Right ventricle myocardium superior (tissue), 1 donor: ENCODE measurements at regions of chr15 and their contacts with region 1.

Region 1: GRCh38 chr15:59247364-59247763 is 40.7 kb downstream of the LDHAL6B start:
- DNase-seq: no peak
- ATAC-seq: peak; percentile 89

Region 2: DNA sequence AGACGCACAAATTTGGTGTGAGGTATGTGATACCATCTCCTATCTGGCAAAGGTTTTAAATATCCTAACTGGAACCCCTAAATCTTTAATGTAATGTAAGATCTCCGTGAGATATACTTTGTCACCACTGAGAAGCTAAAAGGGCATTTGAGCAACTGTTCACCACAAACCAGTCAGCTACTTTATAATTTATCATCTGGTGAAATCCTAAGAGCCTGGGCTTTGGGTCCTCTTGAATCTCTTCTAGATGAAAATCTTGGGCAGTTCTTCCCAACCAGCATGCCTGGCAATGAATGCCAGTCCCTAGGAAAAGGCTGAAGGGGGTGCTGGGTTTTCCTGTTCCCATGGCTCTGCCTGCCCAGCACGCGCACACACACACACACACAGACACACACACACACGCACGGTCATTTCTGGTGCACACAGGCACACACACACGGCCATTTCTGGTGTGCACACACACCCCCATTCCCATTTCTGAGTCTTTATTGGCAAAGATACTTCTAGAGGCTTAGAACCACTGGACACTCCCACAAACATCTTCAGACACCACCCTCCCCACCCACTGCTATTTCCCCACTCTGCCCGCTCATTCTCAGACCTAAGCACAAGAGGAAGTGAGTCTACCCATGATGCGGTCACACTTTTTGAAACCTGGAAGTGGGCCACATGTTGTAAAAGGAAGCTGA is 52.7 kb after region 1 on chr15:
- intact Hi-C with region 1: no loop called
- DNase-seq: peak; percentile 73
- ATAC-seq: peak; percentile 85

Region 3: GRCh38 chr15:59349680-59350420 is 102.5 kb after region 1 on chr15:
- intact Hi-C with region 1: loop called (anchors 10 kb)
- DNase-seq: no peak
- ATAC-seq: peak; percentile 60